Activated CD4-positive, alpha-beta T cell treated with anti-CD3 and anti-CD28 coated beads, Interleukin-2, amount 10 ng/mL, durations not matched to agents 24 days and 14 days (primary cell): ENCODE measurements at regions of chr12 and their contacts with region 1.

Region 1: DNA sequence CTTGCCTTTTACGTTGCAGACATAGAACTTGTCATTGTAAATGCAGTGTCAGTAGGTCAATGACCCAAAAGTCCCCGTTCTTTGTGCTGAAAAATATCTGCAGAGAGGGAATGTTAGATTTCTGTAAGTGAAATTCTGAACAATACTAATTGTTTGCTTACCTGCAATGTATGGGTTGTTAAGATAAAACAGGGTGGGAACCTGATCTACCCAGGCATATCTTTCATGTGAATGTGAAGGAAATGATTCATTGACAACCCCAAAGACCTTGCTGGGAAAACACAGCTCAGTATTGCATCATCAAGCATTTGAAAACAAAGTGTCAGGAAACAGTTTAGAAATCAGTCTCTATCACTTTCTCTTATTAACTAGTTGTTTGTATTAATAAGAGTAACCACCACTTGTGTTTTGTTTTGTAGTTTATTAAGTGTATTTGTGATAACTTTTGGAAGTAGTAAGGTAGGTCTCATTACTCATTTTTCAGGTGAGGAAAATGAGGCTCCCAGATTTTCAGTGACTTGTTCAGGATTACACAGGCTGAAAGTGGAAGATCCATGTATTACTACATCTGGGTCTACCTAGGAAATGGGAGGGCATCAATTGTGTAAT is 57.9 kb upstream of the SLC38A2 start:
- DNase-seq: peak; percentile 76
- H3K4me3 Mint-ChIP-seq: peak overlapping the region; percentile 55
- H3K27ac Mint-ChIP-seq: peak overlapping the region; percentile 78
- H3K4me1 Mint-ChIP-seq: peaks cover 26% of the 10 kb centered on the region
- H3K27me3 Mint-ChIP-seq: no peaks in the 10 kb centered on the region

Region 2: DNA sequence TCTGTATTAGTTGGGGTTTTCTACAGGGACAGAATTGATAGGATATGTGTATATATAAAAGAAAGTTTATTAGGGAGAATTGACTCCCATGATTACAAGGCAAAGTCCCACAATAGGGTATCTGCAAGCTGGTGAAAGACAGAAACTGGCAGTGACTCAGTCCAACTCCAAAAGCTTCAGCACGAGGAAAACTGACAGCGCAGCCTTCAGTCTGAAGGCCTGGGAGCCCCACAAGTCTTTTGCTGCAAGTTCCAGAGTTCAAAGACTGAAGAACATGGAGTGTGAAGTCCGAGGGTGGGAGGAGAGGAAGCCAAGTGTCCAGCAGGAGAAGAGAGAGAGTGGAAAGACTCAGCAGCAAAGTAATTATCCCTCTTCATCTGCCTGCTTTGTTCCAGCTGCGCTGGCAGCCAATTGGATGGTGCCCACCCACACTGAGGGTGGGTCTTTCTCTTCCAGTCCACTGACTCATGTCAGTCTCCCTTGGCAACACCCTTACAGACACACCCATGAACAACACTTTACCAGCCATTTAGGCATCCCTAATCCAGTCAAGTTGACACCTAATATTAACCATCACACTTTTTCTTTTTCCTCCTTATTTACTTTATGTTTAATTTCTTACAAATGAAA is 329.5 kb before region 1 on chr12:
- intact Hi-C with region 1: no loop called
- DNase-seq: no peak
- H3K4me3 Mint-ChIP-seq: no peak overlapping the region
- H3K27ac Mint-ChIP-seq: no peak overlapping the region
- H3K4me1 Mint-ChIP-seq: no peaks in the 10 kb centered on the region
- H3K27me3 Mint-ChIP-seq: peaks cover 15% of the 10 kb centered on the region

Region 3: GRCh38 chr12:46450279-46450748 is 19.9 kb after region 1 on chr12:
- intact Hi-C with region 1: loop called (anchors 2 kb)
- DNase-seq: peak; percentile 48
- H3K4me3 Mint-ChIP-seq: no peak overlapping the region
- H3K27ac Mint-ChIP-seq: peak overlapping the region; percentile 12
- H3K4me1 Mint-ChIP-seq: peaks cover 46% of the 10 kb centered on the region
- H3K27me3 Mint-ChIP-seq: no peaks in the 10 kb centered on the region